Tibial artery (tissue), 4 donors: ENCODE measurements at regions of chr13 and their contacts with region 1.

Region 1: DNA sequence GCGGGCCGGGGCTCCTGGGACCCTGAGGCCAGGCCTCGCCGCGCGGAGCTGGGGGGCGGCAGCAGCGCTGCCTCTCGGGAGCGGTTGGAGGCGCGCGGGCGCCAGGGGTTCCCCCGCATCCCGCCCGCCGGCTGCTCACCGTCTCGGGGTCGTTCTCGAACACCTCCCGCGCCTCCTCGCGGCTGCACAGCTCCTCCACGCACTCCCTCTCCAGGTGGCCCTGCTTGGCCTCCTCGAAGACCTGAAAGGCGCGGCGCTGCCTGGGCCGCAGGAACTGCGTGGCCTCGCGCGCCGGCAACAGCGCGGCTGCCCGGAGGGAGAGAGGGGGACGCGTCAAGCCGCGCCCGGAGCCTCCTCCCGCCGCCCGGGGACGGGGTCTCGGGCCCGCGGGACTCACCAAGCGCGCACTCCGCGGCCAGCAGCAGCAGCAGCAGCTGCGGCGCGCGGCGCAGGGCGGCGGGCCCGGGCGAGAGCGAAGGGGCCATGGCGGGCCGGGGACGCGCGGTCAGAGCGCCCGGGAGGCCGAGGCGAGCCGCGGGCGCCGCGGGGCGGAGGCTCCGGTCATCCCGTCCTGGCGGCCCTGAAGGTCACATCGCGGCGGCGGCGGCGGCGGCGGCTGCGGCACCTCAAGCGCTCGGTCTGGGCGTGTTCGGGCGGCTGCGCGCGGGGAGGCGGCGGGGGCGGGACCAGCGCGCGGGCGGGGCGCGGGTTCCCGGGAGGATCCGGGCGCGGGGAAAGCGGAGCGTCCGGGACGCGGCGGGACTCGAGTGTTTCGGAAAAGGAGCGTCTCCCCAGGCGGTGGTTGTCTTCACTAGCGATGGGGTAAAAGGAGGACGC is at the start of gene GAS6:
- DNase-seq: peak in 1 of 2 donors; percentile 86
- H3K4me3 ChIP-seq: peak within 1 kb of the TSS; percentile 86 to 92
- H3K27ac ChIP-seq: peak within 1 kb of the TSS; percentile 96
- H3K4me1 ChIP-seq: peaks cover 0 to 42% (median 33%) of the 10 kb centered on the region in 4 donors
- H3K27me3 ChIP-seq: no peaks in the 10 kb centered on the region
- CTCF ChIP-seq: peak in 1 of 2 experiments; percentile 22

Region 2: GRCh38 chr13:113816946-113817859 is 46.5 kb before region 1 on chr13:
- intact Hi-C with region 1: loop called (anchors 5 kb)
- DNase-seq: peak; percentile 95 to 98
- H3K4me3 ChIP-seq: peak overlapping the region in 1 of 2 donors; percentile 17
- H3K27ac ChIP-seq: peak overlapping the region; percentile 83 to 90
- H3K4me1 ChIP-seq: peaks cover 0 to 74% (median 51%) of the 10 kb centered on the region in 4 donors
- H3K27me3 ChIP-seq: no peaks in the 10 kb centered on the region
- CTCF ChIP-seq: peak; percentile 85 to 91